PC-3 (cell line): ENCODE measurements at regions of chr6 and their contacts with region 1.

Region 1: GRCh38 chr6:24274441-24275083 is 83.3 kb downstream of the DCDC2 start:
- DNase-seq: peak; percentile 35
- ATAC-seq: no peak
- H3K4me3 ChIP-seq: no peak overlapping the region
- H3K27ac ChIP-seq: no peak overlapping the region
- H3K4me1 ChIP-seq: 0 out of 2 replicates have a peak, but pooled peaks cover 7% of the 10 kb centered on the region
- H3K27me3 ChIP-seq: peaks cover 34% of the 10 kb centered on the region
- CTCF ChIP-seq: peak; percentile 68

Region 2: GRCh38 chr6:23566418-23566817 is 708.1 kb before region 1 on chr6:
- CTCF ChIA-PET with region 1: interaction called, 18 read pairs
- POLR2A ChIA-PET with region 1: no interaction called
- intact Hi-C with region 1: no loop called
- DNase-seq: no peak
- ATAC-seq: no peak
- H3K4me3 ChIP-seq: no peak overlapping the region
- H3K27ac ChIP-seq: no peak overlapping the region
- H3K4me1 ChIP-seq: no peaks in the 10 kb centered on the region
- H3K27me3 ChIP-seq: no peaks in the 10 kb centered on the region
- CTCF ChIP-seq: no peak

Region 3: DNA sequence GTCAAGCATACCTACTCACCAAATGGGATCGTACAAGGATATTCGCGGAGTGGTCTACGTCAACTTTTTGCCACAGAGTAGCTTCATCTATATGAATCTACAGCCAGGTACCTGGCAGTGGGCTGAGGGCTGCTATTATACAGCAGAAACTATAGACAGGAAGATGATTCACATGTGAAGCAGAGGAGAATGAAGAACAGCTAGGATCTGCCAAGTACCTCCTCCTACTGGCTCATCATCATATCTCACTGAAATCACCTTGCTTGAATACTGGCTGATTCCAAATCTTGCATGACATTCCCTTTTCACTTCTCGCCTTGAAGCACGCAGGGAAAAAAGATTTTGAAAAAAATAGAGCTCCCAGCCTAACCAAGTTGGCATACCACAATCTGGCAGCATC is 637.3 kb before region 1 on chr6:
- CTCF ChIA-PET with region 1: interaction called, 10 read pairs
- POLR2A ChIA-PET with region 1: no interaction called
- intact Hi-C with region 1: no loop called
- DNase-seq: peak; percentile 68
- ATAC-seq: peak; percentile 88
- H3K4me3 ChIP-seq: no peak overlapping the region
- H3K27ac ChIP-seq: no peak overlapping the region
- H3K4me1 ChIP-seq: peaks cover 6% of the 10 kb centered on the region; the same call in 1 of the 2 replicates
- H3K27me3 ChIP-seq: peaks cover 19% of the 10 kb centered on the region
- CTCF ChIP-seq: 0 out of 2 replicates have a peak, but pooled peaks have one; percentile 32

Region 4: DNA sequence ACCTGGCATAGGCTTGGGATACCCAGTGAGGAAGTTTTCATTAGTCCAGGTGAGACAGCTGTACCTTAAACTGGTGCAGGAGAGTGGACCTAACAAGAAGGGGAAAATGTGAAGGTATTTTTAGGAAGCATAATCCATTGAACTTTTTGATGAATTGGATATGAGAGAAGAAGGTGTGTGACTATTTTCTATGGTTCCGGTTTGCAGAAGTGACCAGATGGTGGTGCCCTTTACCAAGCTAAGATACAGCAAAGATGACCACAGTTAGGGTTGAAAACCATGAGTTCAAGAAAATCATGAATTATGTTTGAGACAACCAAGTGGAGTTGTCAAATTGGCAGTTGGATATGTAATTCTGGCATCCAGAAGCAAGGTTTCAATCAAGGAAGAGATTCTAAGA is 210.5 kb before region 1 on chr6:
- CTCF ChIA-PET with region 1: no interaction called
- POLR2A ChIA-PET with region 1: no interaction called
- intact Hi-C with region 1: loop called (anchors 1 kb)
- DNase-seq: peak; percentile 57
- ATAC-seq: peak; percentile 55; the same call in 1 of the 2 replicates
- H3K4me3 ChIP-seq: no peak overlapping the region
- H3K27ac ChIP-seq: no peak overlapping the region
- H3K4me1 ChIP-seq: no peaks in the 10 kb centered on the region
- H3K27me3 ChIP-seq: peaks cover 24% of the 10 kb centered on the region
- CTCF ChIP-seq: peak; percentile 83

Region 5: DNA sequence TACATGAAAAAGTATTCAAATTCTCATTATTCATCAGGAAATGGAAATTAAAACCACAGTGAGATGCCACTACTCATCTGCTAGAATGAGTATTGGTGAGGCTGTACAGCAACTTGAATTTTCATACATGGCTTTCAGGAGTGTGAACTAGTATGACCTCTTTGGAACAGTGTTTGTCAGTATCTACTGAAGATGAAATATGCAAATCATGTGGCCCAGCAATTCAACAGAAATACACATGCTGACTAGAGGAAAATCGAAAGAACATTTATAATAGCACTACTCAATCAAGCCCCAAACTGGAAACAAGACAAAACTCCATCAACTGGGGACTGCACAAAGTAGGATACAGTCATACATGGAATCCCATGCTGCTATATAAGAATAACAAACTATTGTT is 18.9 kb before region 1 on chr6:
- CTCF ChIA-PET with region 1: interaction called, 10 read pairs
- POLR2A ChIA-PET with region 1: no interaction called
- intact Hi-C with region 1: no loop called
- DNase-seq: no peak
- ATAC-seq: no peak
- H3K4me3 ChIP-seq: no peak overlapping the region
- H3K27ac ChIP-seq: no peak overlapping the region
- H3K4me1 ChIP-seq: no peaks in the 10 kb centered on the region
- H3K27me3 ChIP-seq: peaks cover 46% of the 10 kb centered on the region
- CTCF ChIP-seq: no peak

Region 6: DNA sequence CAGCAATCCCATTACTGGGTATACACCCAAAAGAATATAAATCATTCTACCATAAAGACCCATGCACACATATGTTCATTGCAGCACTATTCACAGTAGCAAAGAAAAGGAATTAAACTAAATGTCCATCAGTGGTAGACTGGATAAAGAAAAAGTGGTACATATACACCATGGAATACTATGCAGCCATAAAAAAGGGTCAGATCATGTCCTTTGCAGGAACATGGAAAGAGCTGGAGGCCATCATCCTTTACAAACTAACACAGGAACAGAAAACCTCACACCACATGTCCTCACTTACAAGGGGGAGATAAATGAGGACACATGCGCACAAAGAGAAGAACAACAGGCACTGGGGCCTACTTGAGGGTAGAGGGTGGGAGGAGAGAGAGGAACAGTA is 22.4 kb after region 1 on chr6:
- CTCF ChIA-PET with region 1: interaction called, 10 read pairs
- POLR2A ChIA-PET with region 1: no interaction called
- intact Hi-C with region 1: no loop called
- DNase-seq: no peak
- ATAC-seq: no peak
- H3K4me3 ChIP-seq: no peak overlapping the region
- H3K27ac ChIP-seq: no peak overlapping the region
- H3K4me1 ChIP-seq: no peaks in the 10 kb centered on the region
- H3K27me3 ChIP-seq: no peaks in the 10 kb centered on the region
- CTCF ChIP-seq: no peak